Activated CD4-positive, alpha-beta T cell treated with anti-CD3 and anti-CD28 coated beads for 36 hours (primary cell): ENCODE measurements at regions of chr3 and their contacts with region 1.

Region 1: DNA sequence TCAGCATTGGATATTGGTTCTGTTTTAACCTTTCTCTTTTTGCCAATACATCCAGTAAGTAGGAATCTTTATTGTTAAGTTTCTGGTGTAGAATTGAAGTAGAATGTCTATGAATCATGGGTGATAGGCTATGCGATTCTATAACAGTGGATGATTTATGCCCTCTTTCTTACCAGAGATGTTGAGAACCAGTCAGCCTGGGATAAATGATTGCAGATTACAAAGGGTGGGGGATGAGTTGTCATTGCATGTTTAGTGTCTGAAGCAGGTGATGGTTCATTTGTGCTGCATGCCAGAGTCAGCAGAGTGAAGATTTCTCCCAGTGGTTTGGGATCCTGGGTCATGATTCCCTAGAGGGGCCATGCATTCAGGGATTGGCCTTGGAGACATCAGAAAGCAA is 14.3 kb downstream of the RETNLB start:
- DNase-seq: no peak
- ATAC-seq: no peak
- H3K4me3 Mint-ChIP-seq: no peak overlapping the region
- H3K27ac Mint-ChIP-seq: no peak overlapping the region
- H3K4me1 Mint-ChIP-seq: no peaks in the 10 kb centered on the region
- H3K27me3 Mint-ChIP-seq: no peaks in the 10 kb centered on the region

Region 2: DNA sequence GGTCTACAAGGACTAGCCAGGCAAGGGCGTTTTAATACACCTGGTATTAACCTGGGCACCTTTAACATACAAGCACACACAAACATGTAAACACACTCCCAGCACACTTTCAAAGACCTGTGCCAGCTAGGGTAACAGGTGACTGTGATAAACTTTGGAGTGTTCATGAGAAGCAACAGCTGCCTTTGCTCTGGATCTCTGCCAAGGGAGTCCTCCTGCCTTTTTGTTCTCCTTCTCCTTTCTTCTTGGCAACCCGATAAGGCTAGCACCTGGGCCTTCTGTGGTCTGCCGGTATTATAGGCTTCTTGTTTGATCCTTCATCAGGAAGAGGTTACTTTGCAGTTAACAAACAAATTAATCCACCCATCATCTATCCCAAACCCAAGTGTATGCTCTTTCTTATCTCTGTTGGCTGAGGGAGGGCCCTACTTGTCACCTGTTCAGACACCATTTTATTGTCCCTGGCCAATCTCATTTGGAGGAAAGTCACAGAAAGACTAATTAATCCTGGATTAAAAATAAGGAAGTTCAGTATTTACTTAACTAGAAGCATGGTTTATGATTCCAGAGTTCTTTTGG is 14.6 kb after region 1 on chr3 and contains the start of gene RETNLB:
- CTCF ChIA-PET with region 1: interaction called, 3 read pairs
- POLR2A ChIA-PET with region 1: no interaction called
- intact Hi-C with region 1: loop called in 1 of 2 experiments (anchors 1 kb)
- DNase-seq: no peak
- ATAC-seq: no peak
- H3K4me3 Mint-ChIP-seq: no peak within 1 kb of the TSS
- H3K27ac Mint-ChIP-seq: no peak within 1 kb of the TSS
- H3K4me1 Mint-ChIP-seq: peaks cover 4% of the 10 kb centered on the region
- H3K27me3 Mint-ChIP-seq: no peaks in the 10 kb centered on the region
- total RNA-seq, gene RETNLB: not detected